ENCODE measurements at regions of chr1 and their contacts with region 1.

Region 1: GRCh38 chr1:111399792-111400610 is 27.5 kb downstream of the OVGP1 start:
- DNase-seq: peak in 1 of 2 donors; percentile 63
- H3K4me3 ChIP-seq: no peak overlapping the region
- H3K27ac ChIP-seq: no peak overlapping the region
- H3K4me1 ChIP-seq: no peaks in the 10 kb centered on the region
- H3K27me3 ChIP-seq: peaks cover 0 to 16% of the 10 kb centered on the region in 2 donors
- CTCF ChIP-seq: peak; percentile 61 to 65

Region 2: DNA sequence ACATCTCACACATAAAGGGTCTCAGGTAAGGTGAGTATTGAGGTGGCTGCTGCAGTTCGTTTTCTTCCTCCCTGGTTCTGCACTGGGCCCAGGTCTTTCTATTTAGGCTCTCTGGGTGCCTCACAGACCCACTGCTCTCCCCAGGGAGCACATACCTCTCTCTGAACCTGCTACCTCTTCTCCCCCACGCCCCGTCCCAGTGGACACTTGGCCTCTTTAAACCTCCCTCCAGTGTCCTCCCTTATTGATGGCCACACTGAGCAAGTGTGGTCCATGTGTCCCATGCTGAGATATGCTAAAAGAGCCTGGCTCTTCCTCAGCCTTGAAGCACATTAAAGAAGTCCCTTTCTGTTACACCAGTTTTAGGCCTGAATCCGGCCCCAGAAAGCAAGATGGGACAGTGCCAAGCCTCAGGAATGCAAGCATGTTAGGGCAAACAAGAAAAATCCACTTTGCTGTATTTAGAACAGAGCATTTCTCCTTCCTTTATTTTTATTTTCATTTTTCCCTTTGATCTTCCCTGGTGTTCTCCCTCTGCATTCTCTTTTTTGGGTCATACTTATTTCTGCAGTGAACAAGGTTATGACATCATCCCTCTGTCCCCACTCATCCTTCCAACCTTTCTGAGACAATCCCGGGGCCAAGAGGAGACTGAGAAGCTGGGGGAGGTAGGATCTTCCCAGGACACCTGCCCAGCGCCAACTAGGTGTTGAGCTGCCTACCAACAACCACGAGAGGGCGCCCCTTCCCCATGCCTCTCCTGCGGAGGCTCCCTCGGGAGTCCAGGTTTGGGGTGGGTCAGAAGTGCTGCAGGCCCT is 177.5 kb before region 1 on chr1:
- intact Hi-C with region 1: loop called (anchors 5 kb)
- DNase-seq: peak; percentile 57 to 79
- H3K4me3 ChIP-seq: no peak overlapping the region
- H3K27ac ChIP-seq: no peak overlapping the region
- H3K4me1 ChIP-seq: peaks cover 0 to 14% (median 6%) of the 10 kb centered on the region in 4 donors
- H3K27me3 ChIP-seq: no peaks in the 10 kb centered on the region
- CTCF ChIP-seq: peak; percentile 78 to 88

Region 3: GRCh38 chr1:111290630-111291029 is 109.4 kb before region 1 on chr1 and contains the start of gene CHIA:
- intact Hi-C with region 1: no loop called
- DNase-seq: no peak
- H3K4me3 ChIP-seq: no peak within 1 kb of the TSS
- H3K27ac ChIP-seq: no peak within 1 kb of the TSS
- H3K4me1 ChIP-seq: no peaks in the 10 kb centered on the region
- H3K27me3 ChIP-seq: no peaks in the 10 kb centered on the region
- CTCF ChIP-seq: no peak